ENCODE measurements at regions of chr6 and their contacts with region 1.

Region 1: GRCh38 chr6:26342106-26343004 is 22.6 kb upstream of the BTN3A2 start:
- DNase-seq: peak; percentile 30
- ATAC-seq: peak; percentile 8
- H3K4me3 Mint-ChIP-seq: peak overlapping the region; percentile 91
- H3K27ac Mint-ChIP-seq: no peak overlapping the region
- H3K4me1 Mint-ChIP-seq: peaks cover 13% of the 10 kb centered on the region
- H3K27me3 Mint-ChIP-seq: no peaks in the 10 kb centered on the region; the same call in none of the 2 replicates
- CTCF ChIP-seq: no peak

Region 2: GRCh38 chr6:26329763-26330511 is 12.4 kb before region 1 on chr6:
- CTCF ChIA-PET with region 1: interaction called, 29 read pairs
- POLR2A ChIA-PET with region 1: interaction called, 4 read pairs
- DNase-seq: peak; percentile 75
- ATAC-seq: 0 out of 2 replicates have a peak, but pooled peaks have one; percentile 13
- H3K4me3 Mint-ChIP-seq: peak overlapping the region; percentile 94
- H3K27ac Mint-ChIP-seq: no peak overlapping the region
- H3K4me1 Mint-ChIP-seq: peaks cover 9% of the 10 kb centered on the region
- H3K27me3 Mint-ChIP-seq: peaks cover 24% of the 10 kb centered on the region
- CTCF ChIP-seq: no peak

Region 3: DNA sequence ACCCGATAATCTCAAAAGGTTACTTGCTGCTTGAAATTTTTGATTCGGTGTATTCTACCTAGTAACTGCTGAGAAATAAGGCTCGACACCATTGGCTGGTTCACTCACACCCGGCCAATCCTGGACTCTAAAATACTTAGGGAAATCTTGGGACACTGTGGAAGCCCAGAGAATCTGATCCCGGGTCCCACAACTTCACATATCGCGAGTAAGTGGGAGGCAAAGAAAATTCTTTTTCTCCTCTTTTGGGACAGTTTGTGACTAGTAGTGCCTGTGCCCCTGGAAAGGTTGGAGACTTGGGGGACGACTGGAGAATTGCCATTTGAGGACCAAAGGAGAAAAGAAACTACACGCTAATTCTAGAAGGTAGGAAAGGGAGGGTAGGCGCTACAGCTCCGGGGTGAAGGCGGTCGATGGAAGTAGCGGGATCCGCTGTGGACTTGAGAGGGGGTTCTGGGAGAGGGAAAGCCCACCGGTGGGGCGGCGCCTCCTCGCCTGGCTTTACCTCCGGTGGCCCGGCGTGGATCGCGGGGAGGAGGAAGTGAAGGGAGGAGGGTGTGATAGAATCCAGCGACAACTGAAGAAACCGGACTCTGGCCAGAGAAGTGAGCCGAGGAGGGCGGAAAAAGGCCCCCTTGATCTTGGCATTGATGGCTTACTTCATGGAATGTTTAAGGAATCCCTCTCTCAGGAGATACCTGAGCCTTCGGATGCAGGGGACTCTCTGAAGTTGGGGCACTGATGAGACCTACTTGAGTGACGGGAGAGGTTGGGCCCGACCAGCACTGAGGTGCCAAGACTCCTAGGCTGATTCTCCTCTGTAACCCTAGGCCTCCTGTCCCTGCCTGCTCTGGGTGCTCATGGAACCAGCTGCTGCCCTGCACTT is 79.1 kb after region 1 on chr6:
- CTCF ChIA-PET with region 1: interaction called, 25 read pairs
- POLR2A ChIA-PET with region 1: no interaction called
- DNase-seq: peak; percentile 69
- ATAC-seq: peak; percentile 98
- H3K4me3 Mint-ChIP-seq: no peak overlapping the region
- H3K27ac Mint-ChIP-seq: no peak overlapping the region
- H3K4me1 Mint-ChIP-seq: peaks cover 4% of the 10 kb centered on the region
- H3K27me3 Mint-ChIP-seq: peaks cover 11% of the 10 kb centered on the region
- CTCF ChIP-seq: no peak

Region 4: GRCh38 chr6:26500102-26500501 is 157.7 kb after region 1 on chr6 and contains the start of gene BTN1A1:
- CTCF ChIA-PET with region 1: interaction called, 10 read pairs
- POLR2A ChIA-PET with region 1: no interaction called
- DNase-seq: peak; percentile 20
- ATAC-seq: peak; percentile 46
- H3K4me3 Mint-ChIP-seq: peak within 1 kb of the TSS; percentile 74
- H3K27ac Mint-ChIP-seq: no peak within 1 kb of the TSS
- H3K4me1 Mint-ChIP-seq: peaks cover 20% of the 10 kb centered on the region
- H3K27me3 Mint-ChIP-seq: peaks cover 64% of the 10 kb centered on the region
- CTCF ChIP-seq: no peak
- total RNA-seq, gene BTN1A1: 0.14 to 0.15 TPM in 2 of 3 replicates, not detected in the other

Region 5: GRCh38 chr6:26550250-26550993 is 208.1 kb after region 1 on chr6:
- CTCF ChIA-PET with region 1: interaction called, 13 read pairs
- POLR2A ChIA-PET with region 1: interaction called, 3 read pairs
- DNase-seq: peak; percentile 90
- ATAC-seq: peak; percentile 81
- H3K4me3 Mint-ChIP-seq: no peak overlapping the region; the same call in 1 of the 2 replicates
- H3K27ac Mint-ChIP-seq: peak overlapping the region; percentile 98
- H3K4me1 Mint-ChIP-seq: peaks cover 17% of the 10 kb centered on the region
- H3K27me3 Mint-ChIP-seq: no peaks in the 10 kb centered on the region
- CTCF ChIP-seq: no peak